Colonic mucosa (tissue), 4 donors: ENCODE measurements at regions of chr21 and their contacts with region 1.

Region 1: GRCh38 chr21:37767992-37768391 is 148.3 kb downstream of the KCNJ6 start:
- DNase-seq: no peak
- H3K4me3 ChIP-seq: no peak overlapping the region
- H3K27ac ChIP-seq: no peak overlapping the region
- H3K4me1 ChIP-seq: no peaks in the 10 kb centered on the region
- H3K27me3 ChIP-seq: no peaks in the 10 kb centered on the region
- CTCF ChIP-seq: no peak

Region 2: DNA sequence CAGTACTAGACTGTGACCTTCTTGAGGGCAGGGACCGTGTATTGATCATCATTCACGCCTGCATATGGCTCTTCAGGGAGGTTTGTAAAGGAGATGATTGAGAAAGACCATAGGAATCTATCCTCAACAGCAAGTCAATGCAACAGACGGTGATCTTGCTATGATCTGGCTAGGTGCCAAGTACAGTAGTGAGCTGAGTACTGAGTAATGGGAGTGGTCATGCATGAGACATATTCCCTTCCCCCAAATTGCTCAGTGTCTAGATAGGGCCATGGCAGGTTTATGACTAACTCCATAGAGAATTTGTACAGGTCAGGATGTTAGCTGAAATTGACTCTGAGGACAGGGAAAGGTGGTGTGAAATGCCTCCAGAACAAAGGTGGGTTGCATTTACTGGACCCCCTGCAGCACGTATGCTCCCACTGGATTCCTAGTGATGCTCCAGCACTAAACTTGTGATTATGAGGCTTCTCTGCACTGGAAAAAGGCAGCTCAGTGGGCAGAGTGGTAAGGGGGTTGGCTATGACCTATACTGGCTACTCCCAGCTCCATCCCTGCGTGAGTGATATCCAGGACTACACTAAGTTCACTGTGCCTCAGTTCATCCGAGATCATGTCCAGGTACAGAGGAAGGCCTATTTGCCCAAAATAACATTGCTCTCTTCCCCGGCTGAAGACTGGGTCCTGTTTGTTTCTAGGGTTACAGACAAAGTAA is 111.1 kb after region 1 on chr21:
- intact Hi-C with region 1: loop called (anchors 10 kb)
- DNase-seq: no peak
- H3K4me3 ChIP-seq: no peak overlapping the region
- H3K27ac ChIP-seq: no peak overlapping the region
- H3K4me1 ChIP-seq: no peaks in the 10 kb centered on the region
- H3K27me3 ChIP-seq: no peaks in the 10 kb centered on the region
- CTCF ChIP-seq: no peak

Region 3: DNA sequence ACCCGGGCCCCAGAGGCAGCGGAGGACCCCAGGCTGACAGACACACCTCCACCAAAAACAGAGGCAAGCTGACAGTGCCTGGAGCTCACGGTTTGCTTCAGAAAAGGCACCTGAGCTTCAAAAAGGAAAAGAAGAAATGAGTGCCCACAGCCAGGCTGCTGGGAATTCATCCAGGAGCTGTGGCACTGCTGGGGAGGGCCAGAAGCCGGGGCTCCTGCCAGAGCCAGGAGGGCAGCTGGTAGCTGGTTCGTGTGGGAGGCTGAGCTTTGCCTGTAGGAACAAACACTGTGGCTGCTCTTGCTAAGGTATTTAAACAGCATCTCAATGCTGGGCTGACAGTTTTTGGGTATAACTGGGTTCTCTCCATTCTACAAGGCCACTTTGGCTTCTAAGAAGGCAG is 128.8 kb after region 1 on chr21:
- intact Hi-C with region 1: no loop called
- DNase-seq: no peak
- H3K4me3 ChIP-seq: no peak overlapping the region
- H3K27ac ChIP-seq: no peak overlapping the region
- H3K4me1 ChIP-seq: no peaks in the 10 kb centered on the region
- H3K27me3 ChIP-seq: no peaks in the 10 kb centered on the region
- CTCF ChIP-seq: no peak